HEK293 (cell line): ENCODE measurements at regions of chr5 and their contacts with region 1.

Region 1: GRCh38 chr5:68973696-68974095 is 120.1 kb upstream of the SLC30A5 start:
- H3K4me3 ChIP-seq: no peak overlapping the region
- H3K27ac ChIP-seq: no peak overlapping the region
- H3K4me1 ChIP-seq: no peaks in the 10 kb centered on the region
- CTCF ChIP-seq: no peak

Region 2: DNA sequence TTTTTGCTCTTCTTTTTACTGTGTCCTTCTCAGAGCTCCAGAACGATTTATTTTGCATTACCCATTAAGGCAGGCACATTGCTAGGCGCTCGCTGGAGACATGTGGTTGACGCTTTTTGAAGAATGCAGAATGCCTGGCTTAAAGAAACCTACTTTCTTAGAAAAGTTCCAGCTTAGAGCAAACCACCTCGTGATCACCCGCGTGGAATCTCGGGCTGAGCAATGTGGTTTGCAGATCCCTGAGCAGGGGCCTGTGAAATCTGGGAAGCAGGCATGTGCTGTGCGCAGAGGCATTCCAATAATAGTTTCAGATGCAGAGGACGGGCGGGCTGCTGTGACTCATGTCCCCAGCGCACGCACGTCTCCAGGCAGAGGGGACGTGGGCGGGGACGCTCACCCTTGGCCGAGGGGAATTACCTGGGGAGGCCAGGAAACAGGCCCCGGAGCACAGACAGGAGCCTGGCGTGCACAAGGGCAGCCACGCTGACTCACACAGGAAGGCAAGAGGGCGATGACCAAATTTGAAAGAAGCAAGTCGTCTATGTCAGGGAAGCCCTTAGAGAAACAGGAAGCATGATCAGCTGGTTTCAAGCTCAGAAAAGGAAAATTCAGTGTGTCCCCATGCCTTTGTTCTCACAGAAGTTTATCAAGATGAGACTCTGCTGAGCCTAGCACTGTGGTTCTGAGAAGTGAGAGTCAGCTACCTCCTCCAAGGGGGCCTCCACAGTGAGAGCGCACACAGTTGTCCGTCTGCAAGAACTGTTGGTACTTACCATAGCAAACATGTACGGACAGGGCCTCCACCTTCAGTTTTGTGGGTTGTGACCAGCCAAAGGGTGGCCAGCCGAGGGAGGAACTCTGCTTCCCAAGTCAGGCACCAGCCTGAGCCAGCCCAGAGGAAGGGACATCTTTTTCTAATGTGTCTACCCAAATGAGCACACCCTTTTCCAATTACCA is 539.5 kb before region 1 on chr5:
- CTCF ChIA-PET with region 1: no interaction called
- POLR2A ChIA-PET with region 1: no interaction called
- H3K4me3 ChIP-seq: no peak overlapping the region
- H3K27ac ChIP-seq: no peak overlapping the region
- H3K4me1 ChIP-seq: no peaks in the 10 kb centered on the region
- CTCF ChIP-seq: no peak

Region 3: DNA sequence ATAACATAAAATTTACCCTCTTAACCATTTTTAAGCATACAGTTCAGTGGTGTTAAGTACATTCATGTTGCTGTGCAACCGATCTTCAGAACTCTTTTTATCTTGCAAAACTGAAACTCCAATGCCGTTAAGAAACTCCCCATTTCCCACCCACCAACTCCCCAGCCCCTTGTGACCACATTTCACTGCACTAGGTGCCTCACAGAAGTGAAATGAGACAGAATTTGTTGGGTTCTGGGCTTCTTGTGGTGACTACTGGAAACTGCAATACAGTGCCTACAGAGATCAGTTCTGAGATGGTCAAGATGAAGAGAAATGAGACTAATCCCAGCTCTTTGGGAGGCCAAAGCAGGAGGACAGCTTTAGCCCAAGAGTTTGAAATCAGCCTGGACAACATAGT is 82.0 kb before region 1 on chr5:
- CTCF ChIA-PET with region 1: no interaction called
- POLR2A ChIA-PET with region 1: interaction called, 10 read pairs
- H3K4me3 ChIP-seq: no peak overlapping the region
- H3K27ac ChIP-seq: no peak overlapping the region
- H3K4me1 ChIP-seq: no peaks in the 10 kb centered on the region
- CTCF ChIP-seq: no peak

Region 4: GRCh38 chr5:69007726-69008368 is 34.2 kb after region 1 on chr5:
- CTCF ChIA-PET with region 1: no interaction called
- POLR2A ChIA-PET with region 1: no interaction called
- H3K4me3 ChIP-seq: no peak overlapping the region
- H3K27ac ChIP-seq: no peak overlapping the region
- H3K4me1 ChIP-seq: 0 out of 2 replicates have a peak, but pooled peaks cover 2% of the 10 kb centered on the region
- CTCF ChIP-seq: peak; percentile 67; the same call in 1 of the 2 replicates